PC-3 (cell line): ENCODE measurements at regions of chr9 and their contacts with region 1.

Region 1: GRCh38 chr9:94642501-94642900 is 3.2 kb upstream of the FBP1 start:
- DNase-seq: no peak
- ATAC-seq: no peak
- H3K4me3 ChIP-seq: no peak overlapping the region
- H3K27ac ChIP-seq: no peak overlapping the region
- H3K4me1 ChIP-seq: peaks cover 24% of the 10 kb centered on the region
- H3K27me3 ChIP-seq: no peaks in the 10 kb centered on the region
- CTCF ChIP-seq: no peak

Region 2: DNA sequence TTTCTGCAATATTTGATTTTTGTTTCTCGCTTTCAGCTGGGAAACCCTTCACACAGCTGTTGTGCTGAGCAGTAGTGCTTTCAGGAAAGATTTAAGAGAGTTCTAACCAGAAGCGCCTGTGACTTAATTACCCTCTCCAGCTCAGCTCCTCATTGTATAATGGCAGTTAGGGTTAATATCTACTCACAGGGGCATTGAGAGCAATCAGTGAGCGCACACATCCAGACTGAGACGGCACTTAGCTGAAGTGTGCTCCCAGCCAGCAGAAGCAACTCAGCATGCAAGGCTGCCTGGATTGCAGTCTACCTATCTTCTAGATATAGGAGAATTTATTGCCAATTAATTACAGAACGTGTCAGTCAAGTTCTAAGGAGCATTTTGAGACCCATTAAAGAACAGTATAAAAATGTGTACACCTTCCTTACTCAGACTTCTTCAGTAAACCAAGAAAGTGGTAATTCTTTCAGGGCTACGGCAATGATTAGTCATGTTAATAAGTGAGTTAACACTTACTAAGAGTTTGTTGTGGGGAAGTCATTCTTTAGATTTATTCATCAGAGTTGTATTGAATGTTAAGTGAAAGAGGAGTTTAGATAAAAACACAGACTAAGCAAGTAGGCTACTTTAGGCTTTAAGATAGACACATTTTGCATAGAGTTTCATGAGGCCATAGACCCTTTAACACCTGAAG is 199.3 kb before region 1 on chr9:
- CTCF ChIA-PET with region 1: no interaction called
- POLR2A ChIA-PET with region 1: no interaction called
- intact Hi-C with region 1: no loop called
- DNase-seq: no peak
- ATAC-seq: no peak
- H3K4me3 ChIP-seq: no peak overlapping the region
- H3K27ac ChIP-seq: no peak overlapping the region
- H3K4me1 ChIP-seq: peaks cover 7% of the 10 kb centered on the region
- H3K27me3 ChIP-seq: no peaks in the 10 kb centered on the region
- CTCF ChIP-seq: no peak

Region 3: DNA sequence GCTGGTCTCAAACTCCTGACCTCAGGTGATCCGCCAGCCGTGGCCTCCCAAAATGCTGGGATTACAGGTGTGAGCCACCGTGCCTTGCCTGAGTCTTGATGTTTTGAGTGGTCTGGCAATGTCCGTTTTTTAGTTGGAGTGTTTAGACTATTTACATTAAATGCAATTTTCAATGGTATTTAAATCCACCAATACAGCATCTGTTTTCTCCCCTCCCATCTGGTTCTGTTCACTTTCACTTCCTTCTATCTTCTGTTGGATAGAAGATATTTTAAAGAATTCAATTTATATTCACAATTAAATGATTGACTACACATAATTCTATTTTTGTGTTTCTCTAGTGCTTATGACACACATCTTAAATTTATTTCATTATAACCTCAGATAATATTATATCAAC is 113.6 kb before region 1 on chr9:
- CTCF ChIA-PET with region 1: no interaction called
- POLR2A ChIA-PET with region 1: interaction called, 10 read pairs
- intact Hi-C with region 1: no loop called
- DNase-seq: no peak
- ATAC-seq: no peak
- H3K4me3 ChIP-seq: no peak overlapping the region
- H3K27ac ChIP-seq: no peak overlapping the region
- H3K4me1 ChIP-seq: no peaks in the 10 kb centered on the region
- H3K27me3 ChIP-seq: no peaks in the 10 kb centered on the region
- CTCF ChIP-seq: no peak